Posterior cingulate gyrus (tissue), 11 donors: ENCODE measurements at regions of chr5 and their contacts with region 1.

Region 1: GRCh38 chr5:10452768-10453331 is 11.2 kb downstream of the ROPN1L start:
- DNase-seq: peak in 1 of 10 donors; percentile 26

Region 2: GRCh38 chr5:10627160-10627701 is 174.4 kb after region 1 on chr5:
- intact Hi-C with region 1: loop called (anchors 1 kb)
- DNase-seq: peak in 1 of 10 donors; percentile 78

Region 3: DNA sequence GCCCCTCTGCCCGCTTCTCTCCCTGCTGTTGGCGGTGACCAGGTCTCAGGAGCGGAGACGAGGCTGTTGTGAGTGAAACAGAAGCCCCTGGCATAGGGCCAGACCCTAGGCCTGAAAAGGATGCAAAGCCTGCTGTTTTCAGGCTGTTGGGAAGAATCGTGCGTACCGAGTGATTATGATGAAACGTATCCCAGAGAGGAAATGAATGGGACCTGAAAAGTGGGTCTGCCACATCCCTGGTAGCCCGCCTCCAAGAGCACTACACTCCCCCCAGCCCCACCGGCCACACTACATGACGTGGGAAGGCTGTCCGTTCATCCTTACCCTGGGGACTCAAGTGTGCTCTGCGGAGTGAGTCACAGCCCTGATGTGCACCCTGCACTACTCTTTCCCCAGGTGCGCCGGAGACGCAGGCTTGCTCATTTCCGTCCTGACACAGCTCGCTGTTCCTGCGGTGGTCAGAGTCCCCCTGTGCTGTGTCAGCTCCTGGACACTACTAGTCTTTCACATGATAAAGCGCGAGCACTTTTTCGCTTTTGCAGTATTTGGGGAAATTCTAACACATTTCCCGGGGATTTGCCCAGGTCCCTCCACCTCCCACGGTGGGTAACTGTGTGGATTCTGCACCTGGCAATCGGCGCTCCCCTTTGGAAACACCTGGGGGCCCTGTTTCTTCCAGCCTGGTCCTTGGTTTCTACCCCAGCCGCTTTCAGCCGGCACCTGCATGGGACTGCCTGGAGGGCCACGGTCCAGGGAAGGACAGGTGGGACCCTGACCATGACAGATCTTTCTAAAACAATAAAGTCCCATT is 202.5 kb after region 1 on chr5:
- intact Hi-C with region 1: no loop called
- DNase-seq: peak in 1 of 10 donors; percentile 76